CD4-positive, alpha-beta T cell (primary cell): ENCODE measurements at regions of chr18 and their contacts with region 1.

Region 1: GRCh38 chr18:49006641-49007454 is 56.1 kb upstream of the SMAD7 start:
- DNase-seq: no peak
- ATAC-seq: no peak
- H3K4me3 ChIP-seq: no peak overlapping the region
- H3K4me3 Mint-ChIP-seq: no peak overlapping the region
- H3K27ac ChIP-seq: no peak overlapping the region
- H3K27ac Mint-ChIP-seq: no peak overlapping the region
- H3K4me1 ChIP-seq: no peaks in the 10 kb centered on the region
- H3K4me1 Mint-ChIP-seq: no peaks in the 10 kb centered on the region
- H3K27me3 ChIP-seq: no peaks in the 10 kb centered on the region
- H3K27me3 Mint-ChIP-seq: no peaks in the 10 kb centered on the region
- CTCF ChIP-seq: no peak

Region 2: GRCh38 chr18:48573632-48574283 is 433.1 kb before region 1 on chr18:
- CTCF ChIA-PET with region 1: no interaction called
- POLR2A ChIA-PET with region 1: no interaction called
- intact Hi-C with region 1: no loop called
- DNase-seq: no peak
- ATAC-seq: no peak
- H3K4me3 ChIP-seq: no peak overlapping the region
- H3K4me3 Mint-ChIP-seq: no peak overlapping the region
- H3K27ac ChIP-seq: no peak overlapping the region
- H3K27ac Mint-ChIP-seq: no peak overlapping the region
- H3K4me1 ChIP-seq: no peaks in the 10 kb centered on the region
- H3K4me1 Mint-ChIP-seq: no peaks in the 10 kb centered on the region
- H3K27me3 ChIP-seq: no peaks in the 10 kb centered on the region
- H3K27me3 Mint-ChIP-seq: no peaks in the 10 kb centered on the region
- CTCF ChIP-seq: no peak

Region 3: DNA sequence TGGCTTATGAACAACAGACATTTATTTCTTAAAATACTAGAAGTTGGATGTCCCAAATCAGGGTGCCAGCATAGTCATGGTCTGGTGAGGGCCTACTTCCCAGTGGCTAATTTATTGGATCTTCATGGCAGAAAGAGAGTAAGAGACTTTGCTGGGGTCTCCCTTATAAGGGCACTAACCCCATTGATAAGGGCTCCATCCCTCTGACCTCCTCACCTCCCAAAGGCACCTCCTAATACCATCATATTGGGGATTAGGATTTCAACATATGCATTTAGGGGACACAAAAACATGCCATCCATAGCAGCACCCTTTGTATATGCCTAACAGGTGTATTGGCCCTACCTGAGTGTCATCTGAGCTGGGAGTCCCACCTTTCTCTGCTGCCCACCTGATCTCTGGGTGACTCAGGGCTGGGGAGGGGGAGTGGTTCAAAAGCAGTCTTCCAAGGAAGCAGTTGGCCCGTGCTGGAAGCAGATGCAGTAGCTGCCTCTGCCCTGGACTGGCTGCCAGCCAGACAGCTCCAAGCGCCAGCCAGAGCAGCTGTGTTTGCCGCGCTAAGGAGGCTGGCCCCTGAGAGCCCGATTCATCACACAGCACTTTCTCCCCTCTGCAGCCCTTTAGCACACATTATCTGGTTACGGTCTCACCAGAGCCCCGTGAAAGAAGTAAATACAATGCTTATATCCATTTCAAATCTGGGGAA is 140.7 kb before region 1 on chr18:
- CTCF ChIA-PET with region 1: no interaction called
- POLR2A ChIA-PET with region 1: no interaction called
- intact Hi-C with region 1: no loop called
- DNase-seq: no peak
- ATAC-seq: no peak
- H3K4me3 ChIP-seq: no peak overlapping the region
- H3K4me3 Mint-ChIP-seq: no peak overlapping the region
- H3K27ac ChIP-seq: no peak overlapping the region
- H3K27ac Mint-ChIP-seq: no peak overlapping the region
- H3K4me1 ChIP-seq: peaks cover 33% of the 10 kb centered on the region
- H3K4me1 Mint-ChIP-seq: peaks cover 16% of the 10 kb centered on the region
- H3K27me3 ChIP-seq: no peaks in the 10 kb centered on the region
- H3K27me3 Mint-ChIP-seq: no peaks in the 10 kb centered on the region
- CTCF ChIP-seq: no peak

Region 4: DNA sequence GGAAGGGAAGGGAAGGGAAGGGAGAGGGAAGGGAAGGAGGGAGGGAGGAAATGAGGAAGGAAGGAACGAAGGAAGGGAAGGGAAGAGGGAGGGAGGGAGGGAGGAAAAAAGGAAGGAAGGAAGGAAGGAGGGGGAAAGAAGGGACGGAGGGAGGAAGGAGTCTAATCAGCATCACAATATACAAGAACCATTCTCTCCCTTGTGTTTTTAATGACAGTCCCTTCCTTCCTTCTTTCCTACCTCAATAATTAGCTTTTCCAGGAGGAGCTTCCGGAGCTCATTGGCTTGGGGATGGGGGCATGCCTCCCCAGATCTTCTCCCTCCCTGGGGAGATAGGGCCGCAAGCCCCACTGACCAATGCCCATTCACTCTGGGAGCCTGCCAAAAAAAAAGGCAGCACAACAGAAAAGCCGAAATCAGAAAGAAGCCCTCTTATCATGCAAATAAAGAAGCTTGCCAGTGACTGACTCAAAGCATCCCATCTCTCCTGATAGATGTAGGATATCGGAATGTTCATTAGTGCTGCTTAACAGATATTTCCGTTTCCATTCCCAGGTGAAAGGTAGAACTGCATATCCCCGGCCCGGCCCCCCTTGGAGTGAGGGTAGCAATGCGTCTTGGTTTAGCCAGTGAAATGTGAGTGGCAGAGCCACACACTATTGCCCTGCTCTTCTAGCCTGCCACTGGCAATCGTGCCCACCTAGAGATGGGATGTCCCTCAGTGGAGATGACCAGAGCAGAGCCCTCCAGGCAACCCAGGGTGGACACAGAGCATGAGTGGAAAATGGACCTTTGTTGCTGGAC is 38.2 kb before region 1 on chr18:
- CTCF ChIA-PET with region 1: no interaction called
- POLR2A ChIA-PET with region 1: no interaction called
- intact Hi-C with region 1: loop called in 1 of 2 experiments (anchors 2 kb)
- DNase-seq: no peak
- ATAC-seq: no peak
- H3K4me3 ChIP-seq: no peak overlapping the region
- H3K4me3 Mint-ChIP-seq: no peak overlapping the region
- H3K27ac ChIP-seq: no peak overlapping the region
- H3K27ac Mint-ChIP-seq: no peak overlapping the region
- H3K4me1 ChIP-seq: no peaks in the 10 kb centered on the region
- H3K4me1 Mint-ChIP-seq: no peaks in the 10 kb centered on the region
- H3K27me3 ChIP-seq: no peaks in the 10 kb centered on the region
- H3K27me3 Mint-ChIP-seq: no peaks in the 10 kb centered on the region
- CTCF ChIP-seq: no peak